Right cardiac atrium (tissue), 5 donors: ENCODE measurements at regions of chr15 and their contacts with region 1.

Region 1: GRCh38 chr15:80242132-80242769 is 9.8 kb downstream of the CTXND1 start:
- DNase-seq: peak in 1 of 3 donors; percentile 16
- ATAC-seq: peak; percentile 28 to 34
- H3K4me3 ChIP-seq: no peak overlapping the region
- H3K27ac ChIP-seq: no peak overlapping the region
- H3K4me1 ChIP-seq: no peaks in the 10 kb centered on the region
- H3K27me3 ChIP-seq: no peaks in the 10 kb centered on the region

Region 2: DNA sequence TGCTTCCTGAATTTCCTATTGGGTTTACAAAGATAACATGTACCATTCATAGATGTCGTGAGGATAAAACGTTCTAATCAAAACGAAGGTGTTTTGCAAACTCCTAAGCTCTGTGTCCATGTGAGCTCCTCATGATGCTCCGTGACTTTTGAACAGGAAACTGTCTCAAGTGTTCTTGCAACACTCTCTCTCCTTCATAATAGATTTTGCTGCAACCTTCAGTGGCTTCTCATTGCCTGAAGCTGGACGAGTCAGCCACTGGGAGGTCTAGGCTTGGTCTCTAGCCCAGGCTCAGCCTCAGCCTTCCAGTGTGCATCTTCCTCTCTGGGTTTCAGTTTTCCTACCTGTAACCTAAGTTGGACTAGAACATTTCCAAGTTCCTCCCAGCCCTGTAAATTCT is 252.6 kb before region 1 on chr15:
- intact Hi-C with region 1: no loop called
- DNase-seq: no peak
- ATAC-seq: no peak
- H3K4me3 ChIP-seq: no peak overlapping the region
- H3K27ac ChIP-seq: no peak overlapping the region
- H3K4me1 ChIP-seq: no peaks in the 10 kb centered on the region
- H3K27me3 ChIP-seq: no peaks in the 10 kb centered on the region

Region 3: GRCh38 chr15:80309769-80310384 is 67.6 kb after region 1 on chr15:
- intact Hi-C with region 1: loop called in 1 of 4 experiments (anchors 5 kb)
- DNase-seq: no peak
- ATAC-seq: no peak
- H3K4me3 ChIP-seq: no peak overlapping the region
- H3K27ac ChIP-seq: no peak overlapping the region
- H3K4me1 ChIP-seq: no peaks in the 10 kb centered on the region
- H3K27me3 ChIP-seq: no peaks in the 10 kb centered on the region